ENCODE measurements at regions of chr6 and their contacts with region 1.

Region 1: GRCh38 chr6:2127484-2127911 is 117.9 kb downstream of the GMDS start:
- DNase-seq: peak; percentile 68
- H3K4me3 Mint-ChIP-seq: peak overlapping the region; percentile 58
- H3K27ac Mint-ChIP-seq: peak overlapping the region; percentile 78
- H3K4me1 Mint-ChIP-seq: peaks cover 32% of the 10 kb centered on the region
- H3K27me3 Mint-ChIP-seq: peaks cover 2% of the 10 kb centered on the region

Region 2: GRCh38 chr6:2016040-2016439 is 111.5 kb before region 1 on chr6:
- intact Hi-C with region 1: no loop called
- DNase-seq: no peak
- H3K4me3 Mint-ChIP-seq: no peak overlapping the region
- H3K27ac Mint-ChIP-seq: no peak overlapping the region
- H3K4me1 Mint-ChIP-seq: peaks cover 2% of the 10 kb centered on the region
- H3K27me3 Mint-ChIP-seq: no peaks in the 10 kb centered on the region

Region 3: DNA sequence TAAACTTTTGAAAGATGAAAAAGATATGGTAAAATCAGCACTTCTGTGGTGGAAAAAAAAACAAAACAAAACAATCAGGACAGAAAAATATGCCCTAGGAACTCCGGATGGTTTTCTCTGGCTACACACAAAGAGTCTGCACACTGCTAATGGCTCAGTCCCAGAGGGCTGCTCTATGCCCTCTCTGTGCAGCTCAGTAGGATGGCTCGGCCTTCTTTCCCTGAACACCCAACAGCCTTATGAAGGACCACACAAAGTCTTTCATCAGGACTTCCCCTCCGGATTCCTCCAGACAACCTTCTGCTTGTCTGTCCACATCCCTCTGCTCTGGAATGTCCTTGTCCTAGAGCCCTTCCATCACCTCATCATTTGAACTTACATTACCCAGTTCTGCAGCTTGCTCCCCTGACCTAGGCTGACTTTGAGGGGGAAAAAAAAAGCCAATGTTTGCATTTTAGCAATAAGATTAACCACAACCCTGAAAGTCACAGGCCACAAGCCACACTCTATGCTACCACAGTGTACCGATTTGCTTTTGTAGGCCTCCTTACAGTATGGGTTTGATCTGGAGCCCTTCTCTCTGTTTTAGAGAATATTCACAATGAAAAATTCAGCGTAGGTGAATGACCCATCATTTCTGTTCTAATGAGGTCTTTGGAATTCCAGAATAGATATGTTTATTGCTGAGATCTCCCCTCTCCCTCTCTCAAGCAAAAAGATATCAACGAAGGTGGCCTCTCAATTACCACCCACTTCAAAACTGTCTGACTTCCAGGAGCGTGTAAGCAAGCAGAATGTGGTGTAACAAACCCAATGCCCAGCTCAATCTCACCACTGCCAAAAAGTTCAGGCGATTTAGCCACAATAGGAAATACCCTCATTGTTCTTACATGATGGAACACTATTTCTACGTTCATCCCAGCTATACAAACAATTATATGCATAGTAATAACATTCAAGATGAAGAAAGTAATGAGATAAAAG is 46.1 kb before region 1 on chr6:
- intact Hi-C with region 1: loop called (anchors 1 kb)
- DNase-seq: peak; percentile 79
- H3K4me3 Mint-ChIP-seq: peak overlapping the region; percentile 3
- H3K27ac Mint-ChIP-seq: peak overlapping the region; percentile 35
- H3K4me1 Mint-ChIP-seq: peaks cover 33% of the 10 kb centered on the region
- H3K27me3 Mint-ChIP-seq: peaks cover 14% of the 10 kb centered on the region

Region 4: GRCh38 chr6:2158596-2159271 is 31.2 kb after region 1 on chr6:
- intact Hi-C with region 1: loop called (anchors 5 kb)
- DNase-seq: no peak
- H3K4me3 Mint-ChIP-seq: no peak overlapping the region
- H3K27ac Mint-ChIP-seq: no peak overlapping the region
- H3K4me1 Mint-ChIP-seq: peaks cover 37% of the 10 kb centered on the region
- H3K27me3 Mint-ChIP-seq: peaks cover 17% of the 10 kb centered on the region

Region 5: DNA sequence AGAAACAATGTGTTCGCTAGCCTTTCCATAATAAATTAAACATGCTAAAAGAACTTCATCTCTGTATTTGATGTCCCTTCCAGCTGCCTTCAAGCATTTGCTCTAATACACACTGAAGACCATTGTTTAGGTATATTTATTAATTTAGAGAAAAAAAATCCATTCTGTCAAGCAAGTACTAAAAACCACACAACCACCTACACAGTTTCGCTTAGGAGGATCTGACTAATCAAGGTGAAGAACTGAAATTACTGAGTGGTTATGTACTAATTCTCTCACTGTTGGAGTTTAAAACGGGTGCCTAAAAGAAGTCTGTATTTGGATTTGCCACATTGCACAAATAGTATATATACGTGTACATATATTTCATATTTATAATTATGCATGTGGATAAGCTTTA is 59.0 kb after region 1 on chr6:
- intact Hi-C with region 1: loop called (anchors 5 kb)
- DNase-seq: no peak
- H3K4me3 Mint-ChIP-seq: no peak overlapping the region
- H3K27ac Mint-ChIP-seq: no peak overlapping the region
- H3K4me1 Mint-ChIP-seq: peaks cover 14% of the 10 kb centered on the region
- H3K27me3 Mint-ChIP-seq: peaks cover 20% of the 10 kb centered on the region

Region 6: DNA sequence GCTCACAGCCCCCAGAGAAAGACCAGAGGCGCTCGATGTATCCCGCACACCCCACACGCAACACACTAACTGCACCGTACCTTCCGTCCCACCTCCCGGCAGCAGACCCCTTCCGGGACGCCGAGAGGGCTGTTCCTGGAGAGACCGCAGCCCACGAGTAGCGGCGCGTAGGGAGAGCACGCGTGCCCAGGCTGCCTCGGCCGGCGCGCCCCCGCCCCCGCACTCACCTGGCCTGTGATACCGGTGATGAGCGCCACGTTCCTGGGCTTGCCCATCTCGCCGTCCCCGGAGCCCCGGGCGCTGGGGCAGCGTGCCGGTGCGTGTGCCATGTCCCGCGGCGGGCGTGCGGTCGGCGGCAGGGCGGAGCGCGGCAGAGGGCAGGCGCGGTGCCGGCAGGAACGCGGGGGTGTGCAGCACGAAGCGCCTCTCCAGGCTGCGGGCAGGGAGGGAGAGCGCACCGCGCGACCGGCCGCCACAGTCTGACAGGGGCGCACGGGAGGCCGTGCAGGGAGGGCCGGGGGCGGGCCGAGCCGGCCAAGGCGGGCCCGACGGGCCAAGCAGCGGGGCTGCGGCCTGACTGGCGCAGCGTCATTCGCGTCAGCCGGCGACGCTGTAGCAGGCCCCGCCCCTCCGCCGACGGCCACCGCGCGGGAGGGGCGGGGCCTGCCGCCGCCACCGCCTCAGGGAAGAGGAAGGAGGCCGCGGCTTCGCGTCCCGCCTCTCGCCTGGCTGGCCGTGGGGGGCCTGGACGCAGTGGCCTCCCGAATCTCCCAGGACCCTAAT is 117.8 kb after region 1 on chr6 and contains the start of gene GMDS:
- intact Hi-C with region 1: loop called (anchors 5 kb)
- DNase-seq: peak; percentile 96
- H3K4me3 Mint-ChIP-seq: peak within 1 kb of the TSS; percentile 93
- H3K27ac Mint-ChIP-seq: peak within 1 kb of the TSS; percentile 95
- H3K4me1 Mint-ChIP-seq: peaks cover 54% of the 10 kb centered on the region
- H3K27me3 Mint-ChIP-seq: no peaks in the 10 kb centered on the region
- total RNA-seq, gene GMDS: 38.2 and 47.4 TPM in 2 replicates

Region 7: GRCh38 chr6:2396846-2397630 is 269.5 kb after region 1 on chr6:
- intact Hi-C with region 1: no loop called
- DNase-seq: no peak
- H3K4me3 Mint-ChIP-seq: no peak overlapping the region
- H3K27ac Mint-ChIP-seq: no peak overlapping the region
- H3K4me1 Mint-ChIP-seq: no peaks in the 10 kb centered on the region
- H3K27me3 Mint-ChIP-seq: peaks cover 1% of the 10 kb centered on the region